MCF 10A (cell line): ENCODE measurements at regions of chr7 and their contacts with region 1.

Region 1: GRCh38 chr7:35424869-35425495 is 171.1 kb upstream of the TBX20 start:
- DNase-seq: peak; percentile 60
- H3K4me3 Mint-ChIP-seq: no peak overlapping the region
- H3K27ac Mint-ChIP-seq: no peak overlapping the region
- H3K4me1 Mint-ChIP-seq: no peaks in the 10 kb centered on the region
- H3K27me3 Mint-ChIP-seq: peaks cover 38% of the 10 kb centered on the region
- CTCF ChIP-seq: peak; percentile 70

Region 2: GRCh38 chr7:35437619-35438275 is 12.8 kb after region 1 on chr7:
- CTCF ChIA-PET with region 1: interaction called, 21 read pairs
- POLR2A ChIA-PET with region 1: no interaction called
- intact Hi-C with region 1: no loop called
- DNase-seq: no peak
- H3K4me3 Mint-ChIP-seq: no peak overlapping the region
- H3K27ac Mint-ChIP-seq: no peak overlapping the region
- H3K4me1 Mint-ChIP-seq: no peaks in the 10 kb centered on the region
- H3K27me3 Mint-ChIP-seq: peaks cover 62% of the 10 kb centered on the region
- CTCF ChIP-seq: no peak

Region 3: GRCh38 chr7:35446091-35446490 is 21.1 kb after region 1 on chr7:
- CTCF ChIA-PET with region 1: interaction called, 10 read pairs
- POLR2A ChIA-PET with region 1: no interaction called
- intact Hi-C with region 1: no loop called
- DNase-seq: no peak
- H3K4me3 Mint-ChIP-seq: no peak overlapping the region
- H3K27ac Mint-ChIP-seq: no peak overlapping the region
- H3K4me1 Mint-ChIP-seq: no peaks in the 10 kb centered on the region
- H3K27me3 Mint-ChIP-seq: peaks cover 50% of the 10 kb centered on the region
- CTCF ChIP-seq: no peak

Region 4: GRCh38 chr7:36182854-36183604 is 758.0 kb after region 1 on chr7:
- CTCF ChIA-PET with region 1: no interaction called
- POLR2A ChIA-PET with region 1: no interaction called
- intact Hi-C with region 1: no loop called
- DNase-seq: no peak
- H3K4me3 Mint-ChIP-seq: no peak overlapping the region
- H3K27ac Mint-ChIP-seq: no peak overlapping the region
- H3K4me1 Mint-ChIP-seq: peaks cover 8% of the 10 kb centered on the region
- H3K27me3 Mint-ChIP-seq: no peaks in the 10 kb centered on the region
- CTCF ChIP-seq: no peak